ENCODE measurements at regions of chr14 and their contacts with region 1.

Region 1: GRCh38 chr14:100755649-100756048 is 29.0 kb downstream of the DLK1 start:
- DNase-seq: no peak
- ATAC-seq: no peak
- H3K4me3 ChIP-seq: no peak overlapping the region
- H3K27ac ChIP-seq: no peak overlapping the region
- H3K4me1 ChIP-seq: no peaks in the 10 kb centered on the region
- H3K27me3 ChIP-seq: peaks cover 0 to 20% (median 7%) of the 10 kb centered on the region in 7 donors
- CTCF ChIP-seq: no peak

Region 2: GRCh38 chr14:100803226-100803625 is 47.6 kb after region 1 on chr14:
- intact Hi-C with region 1: loop called in 1 of 10 experiments (anchors 2 kb)
- DNase-seq: no peak
- ATAC-seq: no peak
- H3K4me3 ChIP-seq: no peak overlapping the region
- H3K27ac ChIP-seq: no peak overlapping the region
- H3K4me1 ChIP-seq: no peaks in the 10 kb centered on the region
- H3K27me3 ChIP-seq: peaks cover 0 to 59% (median 31%) of the 10 kb centered on the region in 7 donors
- CTCF ChIP-seq: no peak

Measured in heart right ventricle (tissue), 16 donors.